B cell (primary cell): ENCODE measurements at regions of chr12 and their contacts with region 1.

Region 1: GRCh38 chr12:96108321-96108720 is 72.9 kb upstream of the LTA4H start:
- DNase-seq: peak; percentile 46
- ATAC-seq: peak; percentile 49
- H3K4me3 ChIP-seq: no peak overlapping the region
- H3K4me3 Mint-ChIP-seq: peak overlapping the region; percentile 72
- H3K27ac ChIP-seq: peak overlapping the region in 1 of 2 donors; percentile 17
- H3K27ac Mint-ChIP-seq: peak overlapping the region; percentile 66
- H3K4me1 ChIP-seq: peaks cover 14 to 33% of the 10 kb centered on the region in 2 donors
- H3K4me1 Mint-ChIP-seq: peaks cover 38% of the 10 kb centered on the region
- H3K27me3 ChIP-seq: no peaks in the 10 kb centered on the region
- H3K27me3 Mint-ChIP-seq: no peaks in the 10 kb centered on the region
- CTCF ChIP-seq: no peak

Region 2: GRCh38 chr12:96140174-96140573 is 31.9 kb after region 1 on chr12:
- CTCF ChIA-PET with region 1: no interaction called
- POLR2A ChIA-PET with region 1: no interaction called
- intact Hi-C with region 1: loop called (anchors 5 kb)
- DNase-seq: no peak
- ATAC-seq: no peak
- H3K4me3 ChIP-seq: no peak overlapping the region
- H3K4me3 Mint-ChIP-seq: no peak overlapping the region
- H3K27ac ChIP-seq: no peak overlapping the region
- H3K27ac Mint-ChIP-seq: no peak overlapping the region
- H3K4me1 ChIP-seq: peaks cover 20 to 26% of the 10 kb centered on the region in 2 donors
- H3K4me1 Mint-ChIP-seq: peaks cover 33% of the 10 kb centered on the region
- H3K27me3 ChIP-seq: no peaks in the 10 kb centered on the region
- H3K27me3 Mint-ChIP-seq: no peaks in the 10 kb centered on the region
- CTCF ChIP-seq: no peak